Spleen (tissue), 13 donors: ENCODE measurements at regions of chrX and their contacts with region 1.

Region 1: DNA sequence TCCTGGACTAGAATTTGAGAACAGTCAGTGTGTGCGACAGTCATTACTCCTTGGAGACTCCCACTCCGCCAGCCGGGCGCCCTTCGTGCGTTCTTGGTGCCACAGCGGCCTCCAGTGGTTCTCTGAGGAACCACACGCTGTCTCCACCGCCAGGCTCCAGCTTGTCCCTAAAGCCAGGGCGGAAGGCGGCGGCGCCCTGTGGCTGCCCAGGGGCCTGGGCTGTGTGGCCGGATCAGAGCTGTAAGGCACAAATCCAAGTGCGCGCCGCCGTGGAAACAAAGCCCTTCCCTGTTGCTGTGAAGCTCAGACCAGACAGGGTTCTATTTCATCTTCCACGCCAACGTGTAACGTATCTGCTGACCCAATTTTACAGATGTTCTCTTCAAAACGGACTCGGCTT is 34.2 kb downstream of the IDS start:
- DNase-seq: peak; percentile 90
- H3K4me3 ChIP-seq: no peak overlapping the region
- H3K27ac ChIP-seq: no peak overlapping the region
- H3K4me1 ChIP-seq: peaks cover 0 to 8% (median 0%) of the 10 kb centered on the region in 6 donors
- H3K27me3 ChIP-seq: peaks cover 0 to 4% (median 0%) of the 10 kb centered on the region in 7 donors
- CTCF ChIP-seq: peak; percentile 59 to 91 (median 86)
- POLR2A ChIP-seq: no peak

Region 2: DNA sequence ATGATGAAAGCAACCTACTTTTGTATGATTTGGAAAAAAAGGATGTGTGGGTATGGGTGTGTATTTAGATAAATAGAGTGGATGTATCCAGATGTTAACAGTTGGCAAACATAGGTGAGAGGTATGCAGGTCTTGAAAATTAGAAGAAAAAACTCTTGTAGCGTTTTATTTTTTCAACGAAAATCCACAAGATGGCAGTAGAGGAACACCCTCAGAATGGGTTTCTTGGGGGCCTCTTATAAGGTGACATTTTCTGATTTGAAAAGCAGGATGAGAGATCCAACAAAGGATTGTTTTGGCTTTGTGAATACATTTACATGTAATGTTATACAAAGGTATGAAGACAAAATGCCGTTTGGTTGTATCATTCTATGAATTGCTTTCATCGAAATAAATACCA is 1421.5 kb before region 1 on chrX:
- intact Hi-C with region 1: loop called (anchors 10 kb)
- DNase-seq: no peak
- H3K4me3 ChIP-seq: no peak overlapping the region
- H3K27ac ChIP-seq: no peak overlapping the region
- H3K4me1 ChIP-seq: no peaks in the 10 kb centered on the region
- H3K27me3 ChIP-seq: no peaks in the 10 kb centered on the region
- CTCF ChIP-seq: peak in 6 of 11 experiments; percentile 27 to 48 (median 40)
- POLR2A ChIP-seq: no peak